B cell (primary cell): ENCODE measurements at regions of chr3 and their contacts with region 1.

Region 1: DNA sequence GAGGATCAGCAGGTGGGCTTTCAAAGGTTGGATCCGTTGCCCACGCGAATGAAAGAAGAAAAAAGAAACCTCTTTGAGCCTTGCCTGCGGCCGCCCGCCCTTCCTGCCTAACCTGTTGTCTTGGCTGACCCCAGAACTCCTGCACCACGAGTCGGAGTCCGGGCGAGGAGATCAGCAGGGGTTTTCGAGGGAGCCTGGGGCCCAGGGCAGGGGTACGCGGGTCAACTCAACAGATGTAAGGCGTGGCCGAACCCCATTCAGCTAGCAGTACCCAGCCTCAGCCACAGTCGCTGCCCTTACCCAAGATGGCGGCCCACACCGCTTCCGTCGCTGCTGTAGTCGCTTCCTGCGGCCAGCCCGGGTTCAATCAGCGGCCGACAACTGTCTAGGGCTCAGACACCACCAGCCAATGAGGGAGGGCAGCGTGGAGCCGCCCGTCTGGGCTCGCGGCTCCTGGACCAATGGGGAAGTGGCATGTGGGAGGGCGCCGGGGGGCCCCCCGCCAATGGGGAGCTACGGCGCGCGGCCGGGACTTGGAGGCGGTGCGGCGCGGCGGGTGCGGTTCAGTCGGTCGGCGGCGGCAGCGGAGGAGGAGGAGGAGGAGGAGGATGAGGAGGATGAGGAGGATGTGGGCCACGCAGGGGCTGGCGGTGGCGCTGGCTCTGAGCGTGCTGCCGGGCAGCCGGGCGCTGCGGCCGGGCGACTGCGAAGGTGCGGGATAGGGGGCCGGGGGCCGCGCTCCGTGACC is at the start of gene MANF:
- DNase-seq: peak; percentile 98
- ATAC-seq: peak; percentile 95
- H3K4me3 ChIP-seq: peak within 1 kb of the TSS; percentile 74 to 97 (median 87)
- H3K4me3 Mint-ChIP-seq: peak within 1 kb of the TSS; percentile 99
- H3K27ac ChIP-seq: peak within 1 kb of the TSS; percentile 82 to 95
- H3K27ac Mint-ChIP-seq: peak within 1 kb of the TSS; percentile 99
- H3K4me1 ChIP-seq: peaks cover 21 to 33% of the 10 kb centered on the region in 2 donors
- H3K4me1 Mint-ChIP-seq: peaks cover 42% of the 10 kb centered on the region
- H3K27me3 ChIP-seq: no peaks in the 10 kb centered on the region
- H3K27me3 Mint-ChIP-seq: no peaks in the 10 kb centered on the region
- CTCF ChIP-seq: no peak
- total RNA-seq, gene MANF: 28.4 and 29.7 TPM in 2 replicates

Region 2: GRCh38 chr3:50298836-50299637 is 1085.9 kb before region 1 on chr3 and contains the starts of genes HYAL3 and NAA80:
- CTCF ChIA-PET with region 1: no interaction called
- POLR2A ChIA-PET with region 1: no interaction called
- intact Hi-C with region 1: loop called (anchors 10 kb)
- DNase-seq: peak; percentile 100
- ATAC-seq: peak; percentile 91
- H3K4me3 ChIP-seq: peak within 1 kb of the TSS; percentile 68 to 89 (median 88)
- H3K4me3 Mint-ChIP-seq: peak within 1 kb of the TSS; percentile 100
- H3K27ac ChIP-seq: peak within 1 kb of the TSS; percentile 77 to 84
- H3K27ac Mint-ChIP-seq: peak within 1 kb of the TSS; percentile 100
- H3K4me1 ChIP-seq: peaks cover 18 to 24% of the 10 kb centered on the region in 2 donors
- H3K4me1 Mint-ChIP-seq: peaks cover 33% of the 10 kb centered on the region
- H3K27me3 ChIP-seq: no peaks in the 10 kb centered on the region
- H3K27me3 Mint-ChIP-seq: no peaks in the 10 kb centered on the region
- CTCF ChIP-seq: peak; percentile 65
- total RNA-seq, gene HYAL3: 1.9 and 3.7 TPM in 2 replicates
- total RNA-seq, gene NAA80: 33.8 and 37.8 TPM in 2 replicates

Region 3: DNA sequence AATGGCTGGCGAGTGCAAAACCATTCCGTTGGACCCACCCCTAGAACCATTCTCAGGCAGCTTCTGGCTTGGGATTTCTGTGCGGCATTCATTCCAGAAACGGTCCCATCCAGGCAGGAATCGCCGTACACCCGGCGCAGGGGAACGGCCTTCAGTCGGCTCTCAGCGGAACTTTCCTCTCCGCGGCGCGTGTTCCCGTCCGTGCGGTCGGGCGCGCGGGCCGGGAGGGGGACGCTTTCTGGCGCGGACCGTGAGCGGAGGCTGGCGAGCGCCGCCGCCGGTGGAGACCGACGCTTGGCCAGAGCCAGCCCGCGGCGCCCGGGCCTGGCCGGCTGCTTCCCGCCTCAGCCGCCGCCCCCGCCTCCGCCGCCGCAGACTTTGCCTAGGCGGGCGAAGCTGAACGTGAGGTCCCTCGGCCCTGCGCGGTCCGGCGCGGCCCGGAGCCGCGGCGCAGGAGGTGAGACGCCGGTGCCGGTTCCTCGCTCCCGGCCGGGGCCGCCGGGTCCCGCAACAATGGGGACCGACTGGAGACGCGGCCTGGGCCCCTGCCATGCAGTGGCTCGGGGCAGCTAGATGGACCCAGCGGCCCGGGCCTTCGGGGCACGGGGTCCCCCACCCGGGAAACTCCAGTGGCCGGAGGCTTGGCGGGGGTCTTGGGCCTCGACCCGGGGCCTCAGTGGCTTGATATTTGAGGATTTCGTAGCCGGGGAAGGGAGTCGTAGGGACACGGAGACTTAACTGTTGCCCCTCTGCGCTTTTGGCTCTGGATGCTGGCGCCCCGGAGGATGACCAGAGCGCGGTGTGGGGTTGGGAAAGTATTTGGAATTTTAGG is 153.8 kb after region 1 on chr3 and contains the start of gene RAD54L2:
- CTCF ChIA-PET with region 1: no interaction called
- POLR2A ChIA-PET with region 1: no interaction called
- intact Hi-C with region 1: no loop called
- DNase-seq: peak; percentile 88
- ATAC-seq: peak; percentile 95
- H3K4me3 ChIP-seq: peak within 1 kb of the TSS; percentile 75 to 90 (median 84)
- H3K4me3 Mint-ChIP-seq: peak within 1 kb of the TSS; percentile 90
- H3K27ac ChIP-seq: peak within 1 kb of the TSS; percentile 57 to 90
- H3K27ac Mint-ChIP-seq: peak within 1 kb of the TSS; percentile 93
- H3K4me1 ChIP-seq: peaks cover 21 to 22% of the 10 kb centered on the region in 2 donors
- H3K4me1 Mint-ChIP-seq: peaks cover 31% of the 10 kb centered on the region
- H3K27me3 ChIP-seq: no peaks in the 10 kb centered on the region
- H3K27me3 Mint-ChIP-seq: peaks cover 5% of the 10 kb centered on the region
- CTCF ChIP-seq: no peak
- total RNA-seq, gene RAD54L2: 43.0 and 50.0 TPM in 2 replicates

Region 4: GRCh38 chr3:51670823-51671733 is 286.2 kb after region 1 on chr3 and contains the start of gene TEX264:
- CTCF ChIA-PET with region 1: interaction called, 5 read pairs
- POLR2A ChIA-PET with region 1: interaction called, 3 read pairs
- intact Hi-C with region 1: loop called (anchors 1 kb)
- DNase-seq: peak; percentile 97
- ATAC-seq: peak; percentile 85
- H3K4me3 ChIP-seq: peak within 1 kb of the TSS; percentile 46 to 99 (median 96)
- H3K4me3 Mint-ChIP-seq: peak within 1 kb of the TSS; percentile 91
- H3K27ac ChIP-seq: peak within 1 kb of the TSS; percentile 81 to 85
- H3K27ac Mint-ChIP-seq: peak within 1 kb of the TSS; percentile 92
- H3K4me1 ChIP-seq: peaks cover 25 to 55% of the 10 kb centered on the region in 2 donors
- H3K4me1 Mint-ChIP-seq: peaks cover 61% of the 10 kb centered on the region
- H3K27me3 ChIP-seq: no peaks in the 10 kb centered on the region
- H3K27me3 Mint-ChIP-seq: no peaks in the 10 kb centered on the region
- CTCF ChIP-seq: no peak
- total RNA-seq, gene TEX264: 31.8 and 39.1 TPM in 2 replicates